ENCODE measurements at regions of chr17 and their contacts with region 1.

Region 1: DNA sequence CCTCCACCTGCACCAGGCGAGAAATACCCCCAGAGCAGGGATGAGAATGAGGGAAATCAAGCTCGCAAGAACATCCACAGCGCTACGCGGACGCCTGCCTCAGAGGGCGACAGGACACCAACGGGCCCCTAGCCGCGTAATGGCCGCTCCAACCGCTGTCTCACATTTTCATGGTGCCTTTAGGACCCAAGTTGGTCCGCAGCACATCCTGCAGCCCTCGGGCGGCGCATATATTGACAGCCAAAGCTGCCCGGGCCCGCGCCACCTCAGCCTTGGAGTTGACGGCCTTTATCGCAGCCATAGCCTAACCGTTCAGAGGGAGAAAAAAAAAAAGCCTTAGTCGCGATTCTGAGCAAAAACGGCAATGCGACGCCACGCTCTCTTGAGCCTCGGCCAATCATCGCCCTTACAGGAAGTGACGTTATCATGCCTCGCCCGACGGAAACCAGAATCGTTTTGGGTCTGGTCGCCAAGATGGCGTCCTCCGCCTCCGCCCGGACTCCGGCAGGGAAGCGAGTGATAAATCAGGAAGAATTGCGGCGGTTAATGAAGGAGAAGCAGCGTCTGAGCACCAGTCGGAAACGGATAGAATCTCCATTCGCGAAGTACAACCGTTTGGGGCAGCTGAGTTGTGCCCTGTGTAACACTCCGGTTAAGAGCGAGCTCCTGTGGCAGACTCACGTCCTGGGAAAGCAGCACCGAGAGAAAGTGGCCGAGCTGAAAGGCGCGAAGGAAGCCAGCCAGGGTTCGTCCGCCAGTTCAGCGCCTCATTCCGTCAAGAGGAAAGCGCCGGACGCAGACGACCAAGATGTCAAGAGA is at the starts of genes CCT6B and ZNF830:
- DNase-seq: peak; percentile 79 to 86
- H3K4me3 ChIP-seq: peak within 1 kb of the TSS; percentile 97
- H3K27ac ChIP-seq: peak within 1 kb of the TSS; percentile 70
- H3K4me1 ChIP-seq: peaks cover 12% of the 10 kb centered on the region
- H3K27me3 ChIP-seq: no peaks in the 10 kb centered on the region
- CTCF ChIP-seq: no peak
- total RNA-seq, gene CCT6B: 3.7 and 8.5 TPM in 2 replicates
- total RNA-seq, gene ZNF830: 13.6 and 13.9 TPM in 2 replicates

Region 2: GRCh38 chr17:34703533-34703932 is 257.8 kb before region 1 on chr17:
- CTCF ChIA-PET with region 1: no interaction called
- POLR2A ChIA-PET with region 1: no interaction called
- intact Hi-C with region 1: no loop called
- DNase-seq: peak in 1 of 2 experiments; percentile 15
- H3K4me3 ChIP-seq: no peak overlapping the region
- H3K27ac ChIP-seq: no peak overlapping the region
- H3K4me1 ChIP-seq: no peaks in the 10 kb centered on the region
- H3K27me3 ChIP-seq: peaks cover 16% of the 10 kb centered on the region; the same call in 1 of the 2 replicates
- CTCF ChIP-seq: no peak

Region 3: GRCh38 chr17:34913001-34913400 is 48.3 kb before region 1 on chr17:
- CTCF ChIA-PET with region 1: no interaction called
- POLR2A ChIA-PET with region 1: no interaction called
- intact Hi-C with region 1: no loop called
- DNase-seq: no peak
- H3K4me3 ChIP-seq: no peak overlapping the region
- H3K27ac ChIP-seq: no peak overlapping the region
- H3K4me1 ChIP-seq: no peaks in the 10 kb centered on the region
- H3K27me3 ChIP-seq: peaks cover 47% of the 10 kb centered on the region
- CTCF ChIP-seq: no peak

Region 4: GRCh38 chr17:34930283-34930682 is 31.0 kb before region 1 on chr17:
- CTCF ChIA-PET with region 1: no interaction called
- POLR2A ChIA-PET with region 1: no interaction called
- intact Hi-C with region 1: no loop called
- DNase-seq: no peak
- H3K4me3 ChIP-seq: no peak overlapping the region
- H3K27ac ChIP-seq: no peak overlapping the region
- H3K4me1 ChIP-seq: no peaks in the 10 kb centered on the region
- H3K27me3 ChIP-seq: no peaks in the 10 kb centered on the region
- CTCF ChIP-seq: no peak

Region 5: GRCh38 chr17:34980681-34981537 is 19.6 kb after region 1 on chr17:
- CTCF ChIA-PET with region 1: no interaction called
- POLR2A ChIA-PET with region 1: interaction called, 6 read pairs
- intact Hi-C with region 1: loop called (anchors 1 kb)
- DNase-seq: peak; percentile 69 to 84
- H3K4me3 ChIP-seq: peak overlapping the region; percentile 62
- H3K27ac ChIP-seq: peak overlapping the region; percentile 87
- H3K4me1 ChIP-seq: peaks cover 9% of the 10 kb centered on the region
- H3K27me3 ChIP-seq: no peaks in the 10 kb centered on the region
- CTCF ChIP-seq: peak; percentile 48; the same call in 1 of the 2 replicates